PC-9 (cell line): ENCODE measurements at regions of chr1 and their contacts with region 1.

Region 1: DNA sequence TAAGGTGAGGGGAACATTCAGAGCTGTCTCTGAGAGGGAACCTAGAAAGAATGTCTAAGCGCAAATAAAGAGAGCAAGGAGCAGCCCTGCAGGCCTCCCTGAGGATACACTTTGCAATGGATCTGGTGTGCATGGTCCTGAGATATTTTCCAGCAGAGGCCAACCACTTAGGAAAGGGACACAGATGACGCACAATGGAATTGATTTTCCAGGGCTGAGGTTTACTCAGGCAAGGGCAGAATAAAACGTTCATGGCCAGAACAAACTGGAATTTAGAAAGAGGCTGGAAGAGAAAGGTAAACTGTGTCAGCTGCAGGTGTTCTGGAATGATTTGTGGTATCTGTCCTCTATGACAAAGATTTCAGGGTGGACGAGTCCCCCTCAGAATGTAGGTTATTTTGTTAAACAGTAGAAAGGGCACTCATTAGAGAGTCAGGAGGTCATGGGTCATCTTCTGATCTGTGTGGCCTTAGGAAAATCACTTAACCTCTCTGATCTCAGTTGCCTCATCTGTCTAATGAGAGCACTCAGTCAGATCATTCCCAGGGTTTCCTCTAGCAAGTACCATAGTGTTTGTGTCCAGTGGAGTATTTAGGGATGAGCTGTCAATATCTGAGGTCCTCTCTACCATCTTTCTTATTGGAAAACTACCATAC is 61.8 kb upstream of the PGBD5 start:
- DNase-seq: no peak
- H3K4me3 ChIP-seq: no peak overlapping the region
- H3K27ac ChIP-seq: no peak overlapping the region
- H3K4me1 ChIP-seq: no peaks in the 10 kb centered on the region
- H3K27me3 ChIP-seq: peaks cover 53% of the 10 kb centered on the region
- CTCF ChIP-seq: no peak

Region 2: DNA sequence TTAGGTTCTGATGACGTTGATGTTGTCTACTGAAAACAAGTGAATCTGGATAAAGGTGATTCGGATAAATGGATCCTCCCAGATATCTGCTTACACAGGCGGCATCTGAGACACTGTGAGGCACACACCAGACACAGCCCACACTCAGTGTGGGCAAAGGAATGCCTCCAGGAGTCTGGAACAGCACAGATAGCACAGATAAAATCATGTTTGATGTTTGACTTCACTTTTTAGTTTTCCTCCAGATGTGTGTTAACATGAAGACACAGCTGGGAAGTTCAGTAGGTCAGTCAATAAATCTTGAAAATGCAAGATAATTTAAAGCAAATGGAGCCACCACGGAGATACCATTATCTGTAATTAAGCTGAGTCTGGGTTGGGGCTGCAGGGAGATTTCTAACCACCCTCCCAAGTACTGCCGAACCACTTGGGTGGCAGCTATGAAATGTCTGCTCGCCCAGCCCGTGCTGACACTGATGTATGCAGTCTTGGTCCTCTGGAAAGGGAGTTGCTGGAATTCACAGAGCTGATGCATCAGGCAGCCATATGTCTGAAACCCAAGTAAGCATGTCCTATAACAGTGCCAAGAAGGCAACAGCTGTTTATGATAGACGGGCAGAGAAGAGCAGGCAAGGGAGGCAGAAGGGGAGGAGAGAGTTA is 270.9 kb after region 1 on chr1:
- CTCF ChIA-PET with region 1: no interaction called
- POLR2A ChIA-PET with region 1: no interaction called
- intact Hi-C with region 1: no loop called
- DNase-seq: no peak
- H3K4me3 ChIP-seq: no peak overlapping the region
- H3K27ac ChIP-seq: no peak overlapping the region
- H3K4me1 ChIP-seq: 0 out of 2 replicates have a peak, but pooled peaks cover 4% of the 10 kb centered on the region
- H3K27me3 ChIP-seq: no peaks in the 10 kb centered on the region
- CTCF ChIP-seq: no peak

Region 3: DNA sequence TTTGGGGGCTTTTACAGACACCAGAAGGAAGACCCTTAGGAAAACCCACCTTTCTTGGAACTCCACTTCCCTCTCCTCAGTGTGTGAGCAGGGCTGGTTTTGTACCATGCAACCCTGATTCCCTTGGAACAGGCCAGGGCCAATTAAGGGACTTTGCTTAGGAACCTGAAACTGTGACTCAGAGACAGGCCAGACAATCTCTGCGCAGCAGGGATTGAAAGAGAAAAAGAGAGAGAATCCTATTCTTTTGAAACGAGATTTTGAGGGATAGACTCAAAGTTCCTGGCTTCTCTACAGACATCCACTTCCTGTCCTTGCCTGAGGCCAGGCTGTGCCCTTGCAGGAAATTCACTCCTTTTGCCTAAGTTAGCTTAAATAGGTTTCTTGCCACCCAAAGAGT is 403.5 kb after region 1 on chr1:
- CTCF ChIA-PET with region 1: interaction called, 10 read pairs
- POLR2A ChIA-PET with region 1: no interaction called
- intact Hi-C with region 1: no loop called
- DNase-seq: no peak
- H3K4me3 ChIP-seq: no peak overlapping the region
- H3K27ac ChIP-seq: no peak overlapping the region
- H3K4me1 ChIP-seq: no peaks in the 10 kb centered on the region
- H3K27me3 ChIP-seq: no peaks in the 10 kb centered on the region
- CTCF ChIP-seq: no peak

Region 4: GRCh38 chr1:231040019-231040799 is 552.3 kb after region 1 on chr1 and contains the start of gene FAM89A:
- CTCF ChIA-PET with region 1: no interaction called
- POLR2A ChIA-PET with region 1: no interaction called
- intact Hi-C with region 1: no loop called
- DNase-seq: no peak
- H3K4me3 ChIP-seq: no peak within 1 kb of the TSS; the same call in 1 of the 2 replicates
- H3K27ac ChIP-seq: no peak within 1 kb of the TSS
- H3K4me1 ChIP-seq: no peaks in the 10 kb centered on the region
- H3K27me3 ChIP-seq: peaks cover 29% of the 10 kb centered on the region
- CTCF ChIP-seq: no peak
- total RNA-seq, gene FAM89A: 0.24 and 0.35 TPM in 2 replicates